ENCODE measurements at regions of chr9 and their contacts with region 1.

Region 1: GRCh38 chr9:111631071-111631971 is at the start of gene DNAJC25:
- DNase-seq: peak; percentile 97
- ATAC-seq: peak; percentile 94
- H3K4me3 ChIP-seq: peak within 1 kb of the TSS; percentile 86
- H3K27ac ChIP-seq: peak within 1 kb of the TSS; percentile 57
- H3K4me1 ChIP-seq: no peaks in the 10 kb centered on the region; the same call in 1 of the 2 replicates
- H3K27me3 ChIP-seq: no peaks in the 10 kb centered on the region
- CTCF ChIP-seq: no peak
- EP300 ChIP-seq: no peak
- POLR2A ChIP-seq: peak; percentile 100
- RAD21 ChIP-seq: no peak
- polyA plus RNA-seq, gene DNAJC25: 2.4 to 3.7 TPM

Region 2: GRCh38 chr9:110256380-110257096 is 1374.8 kb before region 1 on chr9 and contains the start of gene TXN:
- CTCF ChIA-PET with region 1: no interaction called
- POLR2A ChIA-PET with region 1: no interaction called
- RAD21 ChIA-PET with region 1: no interaction called
- SMC1A ChIA-PET with region 1: no interaction called
- in situ Hi-C with region 1: no loop called
- intact Hi-C with region 1: loop called (anchors 10 kb)
- DNase-seq: peak; percentile 87
- ATAC-seq: peak; percentile 69
- H3K4me3 ChIP-seq: peak within 1 kb of the TSS; percentile 92
- H3K27ac ChIP-seq: peak within 1 kb of the TSS; percentile 91
- H3K4me1 ChIP-seq: peaks cover 24% of the 10 kb centered on the region
- H3K27me3 ChIP-seq: no peaks in the 10 kb centered on the region
- CTCF ChIP-seq: no peak
- EP300 ChIP-seq: peak; percentile 41 to 47; a peak in 1 of 4 replicates
- POLR2A ChIP-seq: peak; percentile 99
- RAD21 ChIP-seq: no peak
- polyA plus RNA-seq, gene TXN: 2,263 to 2,304 TPM

Region 3: GRCh38 chr9:111463048-111463447 is 168.3 kb before region 1 on chr9:
- CTCF ChIA-PET with region 1: no interaction called
- POLR2A ChIA-PET with region 1: no interaction called
- RAD21 ChIA-PET with region 1: no interaction called
- SMC1A ChIA-PET with region 1: no interaction called
- in situ Hi-C with region 1: no loop called
- intact Hi-C with region 1: no loop called
- DNase-seq: no peak
- ATAC-seq: peak; percentile 37
- H3K4me3 ChIP-seq: no peak overlapping the region
- H3K27ac ChIP-seq: no peak overlapping the region
- H3K4me1 ChIP-seq: 0 out of 2 replicates have a peak, but pooled peaks cover 5% of the 10 kb centered on the region
- H3K27me3 ChIP-seq: no peaks in the 10 kb centered on the region
- CTCF ChIP-seq: no peak
- EP300 ChIP-seq: no peak
- POLR2A ChIP-seq: no peak
- RAD21 ChIP-seq: no peak

Region 4: DNA sequence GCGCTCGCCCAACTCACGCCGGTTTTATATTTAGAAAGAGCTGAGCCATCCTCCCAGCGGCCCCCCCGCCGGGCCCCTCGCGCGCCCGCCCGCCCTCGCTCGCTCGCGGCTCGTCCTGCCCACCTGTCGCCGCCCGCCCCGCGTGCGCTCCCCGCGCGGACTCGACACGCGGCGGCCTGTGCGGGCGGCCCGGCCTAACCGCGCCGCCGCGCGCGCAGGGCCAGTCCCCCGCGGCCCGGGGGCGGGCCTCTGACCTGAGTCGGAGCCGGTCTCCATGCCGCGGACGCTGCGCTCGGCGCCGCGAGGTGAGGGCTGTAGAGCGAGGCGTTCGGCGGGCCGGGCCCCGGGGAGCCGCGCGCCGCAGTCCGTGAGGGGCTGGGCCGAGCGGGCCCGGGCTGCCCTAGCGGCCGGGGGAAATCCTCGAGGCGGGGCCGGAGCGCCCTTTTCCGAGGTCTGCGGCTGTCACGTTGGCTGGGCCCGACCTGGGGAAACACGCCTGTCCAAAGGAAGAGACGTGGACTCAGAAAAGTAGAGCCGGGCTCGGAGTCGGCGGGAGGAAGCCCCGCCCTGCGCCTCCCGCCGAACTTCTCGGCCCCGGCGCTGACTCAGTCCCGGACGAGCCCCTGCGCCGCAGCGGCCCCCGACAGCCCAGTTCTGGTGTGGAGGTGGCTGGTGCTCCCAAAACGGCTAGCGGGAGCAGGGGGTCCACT is 147.3 kb before region 1 on chr9 and contains the start of gene ECPAS:
- CTCF ChIA-PET with region 1: no interaction called
- POLR2A ChIA-PET with region 1: interaction called, 3 read pairs
- RAD21 ChIA-PET with region 1: no interaction called
- SMC1A ChIA-PET with region 1: no interaction called
- in situ Hi-C with region 1: no loop called
- intact Hi-C with region 1: loop called (anchors 2 kb)
- DNase-seq: no peak
- ATAC-seq: peak; percentile 80
- H3K4me3 ChIP-seq: peak within 1 kb of the TSS; percentile 79
- H3K27ac ChIP-seq: peak within 1 kb of the TSS; percentile 96
- H3K4me1 ChIP-seq: no peaks in the 10 kb centered on the region; the same call in 1 of the 2 replicates
- H3K27me3 ChIP-seq: no peaks in the 10 kb centered on the region
- CTCF ChIP-seq: no peak
- EP300 ChIP-seq: no peak
- POLR2A ChIP-seq: peak; percentile 84
- RAD21 ChIP-seq: no peak
- polyA plus RNA-seq, gene ECPAS: 11.2 to 18.7 TPM

Region 5: GRCh38 chr9:111661802-111662521 is 30.6 kb after region 1 on chr9:
- CTCF ChIA-PET with region 1: no interaction called
- POLR2A ChIA-PET with region 1: no interaction called
- RAD21 ChIA-PET with region 1: no interaction called
- SMC1A ChIA-PET with region 1: no interaction called
- in situ Hi-C with region 1: no loop called
- intact Hi-C with region 1: loop called (anchors 2 kb)
- DNase-seq: no peak
- ATAC-seq: peak; percentile 51
- H3K4me3 ChIP-seq: peak overlapping the region; percentile 95
- H3K27ac ChIP-seq: peak overlapping the region; percentile 2; the same call in 1 of the 2 replicates
- H3K4me1 ChIP-seq: peaks cover 6% of the 10 kb centered on the region
- H3K27me3 ChIP-seq: no peaks in the 10 kb centered on the region
- CTCF ChIP-seq: no peak
- EP300 ChIP-seq: no peak
- POLR2A ChIP-seq: no peak
- RAD21 ChIP-seq: no peak